ENCODE measurements at regions of chr6 and their contacts with region 1.

Region 1: GRCh38 chr6:109382576-109383437 is 540 bp upstream of the CD164 start:
- DNase-seq: peak; percentile 93
- ATAC-seq: peak; percentile 74
- H3K4me3 Mint-ChIP-seq: peak overlapping the region; percentile 97
- H3K27ac Mint-ChIP-seq: peak overlapping the region; percentile 99
- H3K4me1 Mint-ChIP-seq: peaks cover 40% of the 10 kb centered on the region
- H3K27me3 Mint-ChIP-seq: no peaks in the 10 kb centered on the region
- CTCF ChIP-seq: peak; percentile 80

Region 2: DNA sequence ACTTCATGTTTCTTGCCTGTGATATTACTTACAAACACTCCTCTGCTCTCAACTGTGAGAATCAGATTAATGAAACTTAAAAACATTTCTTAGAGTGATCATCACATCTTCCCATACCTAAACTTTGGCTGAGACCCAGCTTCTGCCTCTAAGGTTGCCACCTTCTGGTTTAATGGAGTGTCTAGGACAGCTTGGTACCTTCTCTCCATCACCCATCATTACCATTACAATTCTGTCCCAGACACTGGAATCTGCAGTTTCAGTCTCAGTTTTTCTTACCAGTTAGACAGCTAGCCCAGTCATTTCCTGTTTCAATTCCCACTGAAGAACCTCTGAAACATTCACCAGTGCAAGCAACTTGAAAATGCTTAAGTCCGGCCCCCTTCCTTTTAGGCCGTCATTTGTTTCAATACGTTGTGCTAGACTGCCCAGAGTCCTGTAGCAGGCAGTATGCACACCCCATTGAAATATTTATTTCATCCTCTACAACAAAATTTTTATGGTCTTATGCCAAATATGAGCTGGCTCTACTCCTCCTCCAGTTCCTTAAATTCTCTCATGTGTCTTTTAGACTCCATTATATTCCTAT is 929.1 kb before region 1 on chr6:
- CTCF ChIA-PET with region 1: no interaction called
- POLR2A ChIA-PET with region 1: no interaction called
- intact Hi-C with region 1: no loop called
- DNase-seq: no peak
- ATAC-seq: peak; percentile 73
- H3K4me3 Mint-ChIP-seq: peak overlapping the region; percentile 32
- H3K27ac Mint-ChIP-seq: peak overlapping the region; percentile 70
- H3K4me1 Mint-ChIP-seq: peaks cover 8% of the 10 kb centered on the region
- H3K27me3 Mint-ChIP-seq: no peaks in the 10 kb centered on the region
- CTCF ChIP-seq: no peak

Region 3: GRCh38 chr6:108541838-108542759 is 840.7 kb before region 1 on chr6:
- CTCF ChIA-PET with region 1: interaction called, 9 read pairs
- POLR2A ChIA-PET with region 1: no interaction called
- intact Hi-C with region 1: loop called (anchors 1 kb)
- DNase-seq: peak; percentile 34
- ATAC-seq: peak; percentile 84
- H3K4me3 Mint-ChIP-seq: peak overlapping the region; percentile 41
- H3K27ac Mint-ChIP-seq: no peak overlapping the region
- H3K4me1 Mint-ChIP-seq: peaks cover 15% of the 10 kb centered on the region
- H3K27me3 Mint-ChIP-seq: peaks cover 7% of the 10 kb centered on the region
- CTCF ChIP-seq: peak; percentile 39

Region 4: GRCh38 chr6:109009236-109009961 is 373.4 kb before region 1 on chr6:
- CTCF ChIA-PET with region 1: no interaction called
- POLR2A ChIA-PET with region 1: no interaction called
- intact Hi-C with region 1: loop called (anchors 2 kb)
- DNase-seq: peak; percentile 87
- ATAC-seq: peak; percentile 97
- H3K4me3 Mint-ChIP-seq: peak overlapping the region; percentile 97
- H3K27ac Mint-ChIP-seq: peak overlapping the region; percentile 95
- H3K4me1 Mint-ChIP-seq: peaks cover 65% of the 10 kb centered on the region
- H3K27me3 Mint-ChIP-seq: no peaks in the 10 kb centered on the region
- CTCF ChIP-seq: no peak

Region 5: GRCh38 chr6:109362102-109362884 is 20.5 kb before region 1 on chr6:
- CTCF ChIA-PET with region 1: no interaction called
- POLR2A ChIA-PET with region 1: interaction called, 10 read pairs
- intact Hi-C with region 1: loop called (anchors 2 kb)
- DNase-seq: no peak
- ATAC-seq: no peak
- H3K4me3 Mint-ChIP-seq: no peak overlapping the region
- H3K27ac Mint-ChIP-seq: no peak overlapping the region
- H3K4me1 Mint-ChIP-seq: peaks cover 26% of the 10 kb centered on the region
- H3K27me3 Mint-ChIP-seq: no peaks in the 10 kb centered on the region
- CTCF ChIP-seq: no peak

Region 6: GRCh38 chr6:109690737-109691621 is 308.2 kb after region 1 on chr6 and contains the starts of genes AK9 and FIG4:
- CTCF ChIA-PET with region 1: interaction called, 3 read pairs
- POLR2A ChIA-PET with region 1: interaction called, 11 read pairs
- intact Hi-C with region 1: loop called (anchors 1 kb)
- DNase-seq: peak; percentile 88
- ATAC-seq: peak; percentile 93
- H3K4me3 Mint-ChIP-seq: peak within 1 kb of the TSS; percentile 94
- H3K27ac Mint-ChIP-seq: peak within 1 kb of the TSS; percentile 95
- H3K4me1 Mint-ChIP-seq: peaks cover 42% of the 10 kb centered on the region
- H3K27me3 Mint-ChIP-seq: no peaks in the 10 kb centered on the region
- CTCF ChIP-seq: no peak
- total RNA-seq, gene AK9: 9.1 and 10.6 TPM in 2 replicates
- total RNA-seq, gene FIG4: 19.8 and 21.8 TPM in 2 replicates